Activated T-helper 2 cell treated with anti-CD3 and anti-CD28 coated beads, Interferon-gamma antibody, Interleukin-2, Interleukin-4, amounts not matched to agents 10 μg/mL and 5 μg/mL and 100 μg/mL, durations not matched to agents 14 hours and 24 hours and 36 hours (primary cell): ENCODE measurements at regions of chr3 and their contacts with region 1.

Region 1: DNA sequence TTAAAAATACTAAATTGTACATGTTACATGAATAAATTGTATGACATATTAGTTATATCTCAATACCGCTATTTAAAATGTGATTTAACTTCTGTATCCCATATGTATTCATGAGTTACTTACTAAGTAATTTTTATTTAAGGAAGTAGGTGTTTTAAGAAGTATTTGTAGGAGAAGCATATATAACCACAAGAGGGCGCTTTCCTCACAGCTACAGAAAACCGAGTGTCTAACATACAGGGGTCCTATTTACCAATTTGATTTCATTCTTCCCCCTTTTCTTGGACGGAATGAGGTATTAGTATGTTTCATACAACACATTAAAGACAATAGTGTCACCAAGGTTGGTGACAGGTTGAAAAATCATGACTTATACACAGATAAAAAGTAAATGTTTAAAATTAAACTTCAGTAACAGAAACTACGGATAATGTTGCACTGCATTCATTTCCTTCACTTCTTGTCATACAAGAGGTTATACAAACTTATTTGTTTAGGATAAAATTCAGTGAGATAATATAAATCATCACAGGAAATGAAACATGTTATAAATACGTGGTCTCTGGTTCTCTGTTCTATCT is 253.6 kb downstream of the MAGI1 start:
- DNase-seq: no peak
- H3K4me3 Mint-ChIP-seq: no peak overlapping the region
- H3K27ac Mint-ChIP-seq: no peak overlapping the region
- H3K4me1 Mint-ChIP-seq: no peaks in the 10 kb centered on the region
- H3K27me3 Mint-ChIP-seq: no peaks in the 10 kb centered on the region

Region 2: GRCh38 chr3:66038726-66039589 is 253.8 kb after region 1 on chr3 and contains the start of gene MAGI1:
- intact Hi-C with region 1: loop called (anchors 5 kb)
- DNase-seq: peak; percentile 46
- H3K4me3 Mint-ChIP-seq: peak within 1 kb of the TSS; percentile 92
- H3K27ac Mint-ChIP-seq: peak within 1 kb of the TSS; percentile 89
- H3K4me1 Mint-ChIP-seq: peaks cover 10% of the 10 kb centered on the region
- H3K27me3 Mint-ChIP-seq: peaks cover 59% of the 10 kb centered on the region
- total RNA-seq, gene MAGI1: 10.8 and 11.0 TPM in 2 replicates

Region 3: GRCh38 chr3:66138336-66139313 is 353.5 kb after region 1 on chr3:
- intact Hi-C with region 1: loop called (anchors 1 kb)
- DNase-seq: no peak
- H3K4me3 Mint-ChIP-seq: no peak overlapping the region
- H3K27ac Mint-ChIP-seq: no peak overlapping the region
- H3K4me1 Mint-ChIP-seq: no peaks in the 10 kb centered on the region
- H3K27me3 Mint-ChIP-seq: peaks cover 4% of the 10 kb centered on the region